Sigmoid colon (tissue), 7 donors: ENCODE measurements at regions of chr9 and their contacts with region 1.

Region 1: GRCh38 chr9:37582548-37583157 is 6.5 kb upstream of the FBXO10 start:
- DNase-seq: no peak
- H3K4me3 ChIP-seq: no peak overlapping the region
- H3K27ac ChIP-seq: peak overlapping the region in 3 of 4 donors; percentile 75 to 82 (median 77)
- H3K4me1 ChIP-seq: peaks cover 0 to 39% (median 32%) of the 10 kb centered on the region in 4 donors
- H3K27me3 ChIP-seq: no peaks in the 10 kb centered on the region
- CTCF ChIP-seq: peak; percentile 52 to 78 (median 68)
- EP300 ChIP-seq: peak in 2 of 4 donors; percentile 20 to 42
- POLR2A ChIP-seq: no peak

Region 2: GRCh38 chr9:37617832-37618231 is 35.2 kb after region 1 on chr9:
- intact Hi-C with region 1: no loop called
- DNase-seq: no peak
- H3K4me3 ChIP-seq: no peak overlapping the region
- H3K27ac ChIP-seq: no peak overlapping the region
- H3K4me1 ChIP-seq: no peaks in the 10 kb centered on the region
- H3K27me3 ChIP-seq: no peaks in the 10 kb centered on the region
- CTCF ChIP-seq: no peak
- EP300 ChIP-seq: no peak
- POLR2A ChIP-seq: no peak

Region 3: GRCh38 chr9:37650873-37651768 is 68.5 kb after region 1 on chr9 and contains the start of gene FRMPD1:
- intact Hi-C with region 1: loop called (anchors 2 kb)
- DNase-seq: peak; percentile 74
- H3K4me3 ChIP-seq: peak within 1 kb of the TSS; percentile 41 to 70 (median 58)
- H3K27ac ChIP-seq: no peak within 1 kb of the TSS
- H3K4me1 ChIP-seq: peaks cover 0 to 12% (median 8%) of the 10 kb centered on the region in 4 donors
- H3K27me3 ChIP-seq: peaks cover 0 to 36% (median 20%) of the 10 kb centered on the region in 3 donors
- CTCF ChIP-seq: no peak
- EP300 ChIP-seq: no peak
- POLR2A ChIP-seq: no peak
- total RNA-seq, gene FRMPD1: 0.16 to 0.71 (median 0.34) TPM

Region 4: DNA sequence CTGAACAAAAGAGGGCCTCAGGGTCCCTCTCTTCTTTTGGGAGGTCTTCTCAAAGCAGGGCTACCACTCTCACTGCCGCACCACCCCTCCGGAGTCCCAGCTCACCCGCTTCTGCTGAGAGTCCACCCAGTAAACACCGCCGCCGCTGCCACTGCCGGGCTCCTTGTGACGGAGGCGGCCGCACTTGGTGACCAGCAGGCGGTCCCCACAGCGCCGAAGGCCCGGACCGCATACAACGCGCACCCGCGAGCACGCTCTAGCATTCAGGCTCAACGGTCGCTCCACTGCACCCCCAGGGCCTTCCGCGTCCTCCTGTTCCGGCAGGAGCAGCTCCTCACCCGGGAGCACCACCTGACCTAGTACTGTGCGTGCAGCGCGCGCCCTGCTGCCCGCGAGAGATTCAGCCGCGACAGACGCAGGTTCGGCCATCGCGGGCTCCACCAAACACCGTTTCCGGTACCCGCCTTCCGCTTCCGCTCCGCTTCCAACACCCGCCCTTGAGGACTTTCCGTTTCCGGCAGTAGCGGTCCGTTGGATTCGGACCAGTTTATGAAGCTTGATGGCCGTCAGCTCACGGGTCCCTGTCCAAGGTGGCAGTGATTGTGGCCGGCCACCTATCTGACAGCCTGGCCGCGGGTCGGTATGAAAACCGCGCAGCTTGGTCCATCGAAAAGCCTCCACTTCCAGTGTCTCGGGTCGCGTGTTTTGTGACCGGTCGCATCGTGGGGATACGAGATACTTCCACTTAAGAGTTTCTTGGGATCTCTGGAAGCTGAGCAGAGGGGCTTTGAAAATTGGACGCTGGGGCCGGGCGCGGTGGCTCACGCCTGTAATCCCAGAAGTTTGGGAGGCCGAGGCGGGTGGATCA is 202.2 kb after region 1 on chr9 and contains the start of gene EXOSC3:
- intact Hi-C with region 1: loop called (anchors 5 kb)
- DNase-seq: peak; percentile 93
- H3K4me3 ChIP-seq: peak within 1 kb of the TSS; percentile 84 to 92 (median 86)
- H3K27ac ChIP-seq: peak within 1 kb of the TSS; percentile 85 to 89 (median 86)
- H3K4me1 ChIP-seq: peaks cover 0 to 19% (median 14%) of the 10 kb centered on the region in 4 donors
- H3K27me3 ChIP-seq: peaks cover 0 to 5% (median 4%) of the 10 kb centered on the region in 3 donors
- CTCF ChIP-seq: peak in 1 of 4 experiments; percentile 15
- EP300 ChIP-seq: no peak
- POLR2A ChIP-seq: peak; percentile 61 to 63
- total RNA-seq, gene EXOSC3: 38.7 to 44.6 (median 41.3) TPM